Panc1 (cell line): ENCODE measurements at regions of chr1 and their contacts with region 1.

Region 1: DNA sequence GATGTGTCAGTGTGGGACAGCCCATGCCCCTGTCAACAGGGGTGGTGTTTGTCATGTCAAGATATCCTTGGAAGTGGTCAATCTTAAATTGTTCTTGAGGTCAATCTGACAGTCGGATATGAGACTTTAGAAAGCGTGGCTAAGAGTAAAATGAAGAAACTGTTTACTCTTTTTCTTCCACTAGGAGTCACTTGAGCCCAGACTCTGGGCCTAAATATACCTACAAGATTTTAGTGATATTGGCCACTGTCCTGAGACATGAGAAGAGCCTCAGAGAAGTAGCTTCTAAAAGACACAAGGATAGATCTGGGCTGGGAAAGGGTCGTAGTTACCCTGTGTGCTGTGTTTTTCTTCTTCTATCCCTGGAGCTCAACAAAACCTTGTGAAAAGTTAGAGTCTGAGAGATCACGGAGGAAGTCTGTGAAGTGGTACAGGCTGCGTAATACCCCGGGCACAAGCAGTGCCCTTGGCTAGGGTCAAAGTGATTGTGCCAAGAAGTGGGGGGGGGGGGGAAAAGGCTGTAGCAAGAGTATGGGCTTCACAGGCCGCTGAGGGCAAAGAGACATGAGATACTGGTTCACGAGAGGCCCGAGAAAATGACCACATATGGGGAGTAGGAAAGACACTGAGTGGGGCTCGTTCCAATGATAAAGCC is 355.2 kb upstream of the GREM2 start:
- DNase-seq: no peak
- ATAC-seq: no peak
- H3K4me3 ChIP-seq: no peak overlapping the region
- H3K27ac ChIP-seq: no peak overlapping the region
- H3K4me1 ChIP-seq: no peaks in the 10 kb centered on the region
- H3K27me3 ChIP-seq: no peaks in the 10 kb centered on the region
- CTCF ChIP-seq: peak; percentile 35

Region 2: GRCh38 chr1:241007668-241008067 is 40.5 kb after region 1 on chr1:
- CTCF ChIA-PET with region 1: interaction called, 14 read pairs
- POLR2A ChIA-PET with region 1: no interaction called
- in situ Hi-C with region 1: no loop called
- intact Hi-C with region 1: no loop called
- DNase-seq: no peak
- ATAC-seq: no peak
- H3K4me3 ChIP-seq: no peak overlapping the region
- H3K27ac ChIP-seq: no peak overlapping the region
- H3K4me1 ChIP-seq: no peaks in the 10 kb centered on the region
- H3K27me3 ChIP-seq: no peaks in the 10 kb centered on the region
- CTCF ChIP-seq: no peak

Region 3: GRCh38 chr1:241485554-241485992 is 518.4 kb after region 1 on chr1:
- CTCF ChIA-PET with region 1: no interaction called
- POLR2A ChIA-PET with region 1: no interaction called
- in situ Hi-C with region 1: no loop called
- intact Hi-C with region 1: loop called (anchors 5 kb)
- DNase-seq: no peak
- ATAC-seq: peak; percentile 60; the same call in 1 of the 2 replicates
- H3K4me3 ChIP-seq: no peak overlapping the region
- H3K27ac ChIP-seq: no peak overlapping the region
- H3K4me1 ChIP-seq: no peaks in the 10 kb centered on the region; the same call in 1 of the 2 replicates
- H3K27me3 ChIP-seq: no peaks in the 10 kb centered on the region
- CTCF ChIP-seq: peak; percentile 66